HCT116 (cell line): ENCODE measurements at regions of chr7 and their contacts with region 1.

Region 1: GRCh38 chr7:79741684-79742083 is 288.2 kb upstream of the MAGI2 start:
- DNase-seq: no peak
- ATAC-seq: peak; percentile 74
- H3K4me3 ChIP-seq: no peak overlapping the region
- H3K27ac ChIP-seq: no peak overlapping the region
- H3K4me1 ChIP-seq: no peaks in the 10 kb centered on the region
- H3K27me3 ChIP-seq: no peaks in the 10 kb centered on the region
- CTCF ChIP-seq: peak; percentile 33 to 60 (median 41); a peak in 5 of 6 replicates
- POLR2A ChIP-seq: no peak
- RAD21 ChIP-seq: peak; percentile 70

Region 2: GRCh38 chr7:78587443-78588044 is 1154.1 kb before region 1 on chr7:
- CTCF ChIA-PET with region 1: no interaction called
- POLR2A ChIA-PET with region 1: no interaction called
- RAD21 ChIA-PET with region 1: no interaction called
- intact Hi-C with region 1: loop called (anchors 5 kb)
- DNase-seq: peak; percentile 6
- ATAC-seq: peak; percentile 67
- H3K4me3 ChIP-seq: no peak overlapping the region
- H3K27ac ChIP-seq: no peak overlapping the region
- H3K4me1 ChIP-seq: no peaks in the 10 kb centered on the region
- H3K27me3 ChIP-seq: 0 out of 2 replicates have a peak, but pooled peaks cover 3% of the 10 kb centered on the region
- CTCF ChIP-seq: peak; percentile 54 to 79 (median 55); a peak in 4 of 6 replicates
- POLR2A ChIP-seq: no peak
- RAD21 ChIP-seq: peak; percentile 74

Region 3: DNA sequence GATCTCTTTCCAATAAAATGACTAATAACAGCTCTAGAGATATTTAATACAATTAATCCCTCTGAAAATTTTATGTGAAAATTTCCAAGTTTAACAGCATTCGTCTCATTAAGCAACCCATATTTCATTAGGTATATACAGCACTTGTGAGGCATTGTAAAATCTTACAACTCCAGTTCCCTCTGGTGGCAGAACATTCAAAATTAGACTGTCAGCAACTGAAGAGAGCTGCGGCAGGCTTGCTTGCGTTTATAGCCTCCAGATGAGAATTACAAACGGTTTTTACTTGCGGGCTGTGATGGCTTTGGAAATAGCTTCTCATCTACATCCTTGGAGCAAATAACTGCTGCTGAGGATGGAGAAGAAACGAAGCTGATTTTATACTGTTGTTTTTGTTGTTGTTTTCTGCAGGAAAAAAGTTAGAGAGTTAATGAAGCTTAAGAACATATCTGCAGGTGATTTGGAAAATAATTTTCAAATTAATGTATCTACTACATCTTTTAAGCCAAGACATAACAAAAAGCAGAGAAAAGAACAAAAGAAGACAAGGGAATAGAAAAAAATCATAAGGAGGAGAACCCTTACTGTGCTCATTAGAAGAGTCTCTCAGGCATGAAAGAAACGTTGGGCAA is 459.5 kb before region 1 on chr7:
- CTCF ChIA-PET with region 1: interaction called, 3 read pairs
- POLR2A ChIA-PET with region 1: no interaction called
- RAD21 ChIA-PET with region 1: no interaction called
- intact Hi-C with region 1: loop called (anchors 5 kb)
- DNase-seq: peak; percentile 35
- ATAC-seq: peak; percentile 76
- H3K4me3 ChIP-seq: no peak overlapping the region
- H3K27ac ChIP-seq: no peak overlapping the region
- H3K4me1 ChIP-seq: peaks cover 8 to 13% of the 10 kb centered on the region in 2 experiments; a peak in 2 of 4 replicates
- H3K27me3 ChIP-seq: no peaks in the 10 kb centered on the region
- CTCF ChIP-seq: peak; percentile 36 to 47 (median 40); a peak in 4 of 6 replicates
- POLR2A ChIP-seq: no peak
- RAD21 ChIP-seq: peak; percentile 43

Region 4: GRCh38 chr7:80362010-80362618 is 620.4 kb after region 1 on chr7:
- CTCF ChIA-PET with region 1: no interaction called
- POLR2A ChIA-PET with region 1: no interaction called
- RAD21 ChIA-PET with region 1: no interaction called
- intact Hi-C with region 1: no loop called
- DNase-seq: no peak
- ATAC-seq: no peak
- H3K4me3 ChIP-seq: no peak overlapping the region
- H3K27ac ChIP-seq: no peak overlapping the region
- H3K4me1 ChIP-seq: peaks cover 0 to 5% of the 10 kb centered on the region in 2 experiments; a peak in 1 of 4 replicates
- H3K27me3 ChIP-seq: no peaks in the 10 kb centered on the region
- CTCF ChIP-seq: no peak
- POLR2A ChIP-seq: no peak
- RAD21 ChIP-seq: no peak